Calu3 (cell line): ENCODE measurements at regions of chr9 and their contacts with region 1.

Region 1: DNA sequence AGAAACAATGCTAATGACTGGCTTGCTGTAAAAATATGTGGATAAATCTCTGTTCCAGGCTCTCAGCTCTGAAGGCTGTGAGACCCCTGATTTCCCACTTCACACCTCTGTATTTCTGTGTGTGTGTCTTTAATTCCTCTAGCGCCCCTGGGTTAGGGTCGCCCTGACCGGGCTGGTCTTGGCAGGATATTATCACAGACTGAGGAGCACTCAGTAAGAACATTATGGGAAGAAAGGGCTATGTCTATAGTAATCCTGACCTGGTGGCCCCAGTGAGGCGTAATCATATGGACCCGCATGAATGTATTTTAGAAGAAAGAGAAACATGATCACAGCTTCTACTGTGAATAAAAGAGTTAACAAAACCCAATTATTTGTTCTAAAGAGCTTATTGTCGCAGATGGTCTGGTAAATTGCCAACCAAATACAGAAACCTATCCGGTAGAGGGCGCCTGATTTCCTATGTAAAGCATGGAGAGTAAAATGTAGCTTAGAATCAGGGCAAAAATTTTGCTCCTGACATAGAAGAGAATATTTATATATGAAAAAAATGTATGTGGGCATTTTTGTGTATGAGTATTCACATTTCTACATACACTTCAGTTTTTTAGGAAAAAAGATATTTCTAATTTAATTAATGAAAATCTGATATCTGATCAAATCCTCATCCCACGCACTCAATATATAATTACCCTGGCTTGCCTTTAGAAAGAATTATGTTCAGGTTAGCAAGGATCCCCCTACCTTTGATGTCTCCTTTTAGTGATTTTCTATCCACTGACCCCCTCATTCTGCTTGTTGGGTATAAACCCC is 5.8 kb upstream of the IFNA1 start:
- DNase-seq: peak; percentile 57
- H3K4me3 Mint-ChIP-seq: no peak overlapping the region
- H3K27ac Mint-ChIP-seq: no peak overlapping the region
- H3K4me1 Mint-ChIP-seq: no peaks in the 10 kb centered on the region
- H3K27me3 Mint-ChIP-seq: no peaks in the 10 kb centered on the region
- CTCF ChIP-seq: peak; percentile 8

Region 2: DNA sequence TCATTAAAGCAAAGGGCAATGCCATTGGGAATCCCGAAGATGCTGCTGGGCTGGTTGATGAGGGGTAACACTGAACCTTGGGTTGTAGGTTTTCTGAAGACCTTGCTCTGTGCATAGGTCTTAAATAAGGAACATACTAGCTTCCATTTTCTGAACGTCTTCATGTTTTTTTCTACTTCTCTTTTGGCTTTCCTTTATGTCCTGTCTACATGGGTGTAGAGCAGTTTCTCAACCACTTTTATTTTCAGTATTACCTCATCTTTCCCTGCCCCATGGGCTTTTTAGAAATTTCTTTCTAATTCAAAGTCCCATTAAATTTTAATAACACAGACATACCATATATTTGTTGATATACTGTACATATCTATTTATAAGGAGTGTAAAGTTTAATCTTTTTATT is 194.5 kb before region 1 on chr9 and contains the start of gene IFNA14:
- CTCF ChIA-PET with region 1: interaction called, 4 read pairs
- intact Hi-C with region 1: loop called (anchors 10 kb)
- DNase-seq: no peak
- H3K4me3 Mint-ChIP-seq: no peak within 1 kb of the TSS
- H3K27ac Mint-ChIP-seq: no peak within 1 kb of the TSS
- H3K4me1 Mint-ChIP-seq: peaks cover 8% of the 10 kb centered on the region
- H3K27me3 Mint-ChIP-seq: no peaks in the 10 kb centered on the region
- CTCF ChIP-seq: no peak
- total RNA-seq, gene IFNA14: not detected in 2 replicates

Region 3: GRCh38 chr9:21326526-21327139 is 107.8 kb before region 1 on chr9:
- CTCF ChIA-PET with region 1: interaction called, 8 read pairs
- intact Hi-C with region 1: loop called (anchors 10 kb)
- DNase-seq: no peak
- H3K4me3 Mint-ChIP-seq: no peak overlapping the region
- H3K27ac Mint-ChIP-seq: no peak overlapping the region
- H3K4me1 Mint-ChIP-seq: peaks cover 5% of the 10 kb centered on the region
- H3K27me3 Mint-ChIP-seq: no peaks in the 10 kb centered on the region
- CTCF ChIP-seq: no peak